ENCODE measurements at regions of chr1 and their contacts with region 1.

Region 1: DNA sequence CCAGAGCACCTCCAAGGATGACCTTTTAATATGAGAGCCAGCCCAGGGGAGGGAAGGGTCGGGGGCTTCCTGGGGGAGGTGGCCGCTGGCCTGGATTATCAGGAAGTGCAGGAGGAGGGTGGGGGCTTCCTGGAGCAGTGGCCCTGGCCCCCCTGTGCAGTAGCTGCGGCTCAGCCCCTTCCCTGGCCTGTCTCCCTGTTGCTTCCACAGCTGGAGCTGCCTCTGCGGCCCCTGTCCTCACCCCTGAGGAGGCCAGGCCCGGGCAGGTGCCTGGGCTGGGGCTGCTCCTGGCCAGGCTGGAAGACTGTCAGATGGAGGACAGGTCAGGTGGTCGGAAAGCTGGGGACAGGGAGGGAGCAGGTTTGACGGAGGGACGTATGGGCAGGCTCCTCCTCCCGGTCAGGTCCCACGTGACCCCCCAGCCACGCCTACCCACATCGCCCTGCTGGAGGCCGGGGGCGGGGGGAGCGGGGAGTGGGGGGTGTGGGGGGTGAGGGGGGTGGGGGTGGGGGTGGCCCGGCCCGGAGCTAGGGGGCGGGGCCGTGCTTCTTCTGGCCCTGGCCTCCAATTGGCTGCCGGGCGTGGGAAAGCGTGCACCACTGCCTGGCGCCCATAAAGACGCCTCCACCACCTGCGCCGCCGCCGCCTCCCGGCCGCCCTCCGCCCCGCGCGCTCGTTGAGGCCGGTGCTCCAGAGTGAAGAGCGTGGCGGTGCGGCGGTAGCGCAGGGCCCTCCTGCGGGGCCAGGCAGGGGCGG is 10.2 kb upstream of the TNFRSF14 start:
- DNase-seq: peak; percentile 93 to 94
- ATAC-seq: peak; percentile 77
- H3K4me3 ChIP-seq: peak overlapping the region in 1 of 2 donors; percentile 43
- H3K27ac ChIP-seq: no peak overlapping the region
- H3K4me1 ChIP-seq: no peaks in the 10 kb centered on the region
- H3K27me3 ChIP-seq: no peaks in the 10 kb centered on the region

Region 2: DNA sequence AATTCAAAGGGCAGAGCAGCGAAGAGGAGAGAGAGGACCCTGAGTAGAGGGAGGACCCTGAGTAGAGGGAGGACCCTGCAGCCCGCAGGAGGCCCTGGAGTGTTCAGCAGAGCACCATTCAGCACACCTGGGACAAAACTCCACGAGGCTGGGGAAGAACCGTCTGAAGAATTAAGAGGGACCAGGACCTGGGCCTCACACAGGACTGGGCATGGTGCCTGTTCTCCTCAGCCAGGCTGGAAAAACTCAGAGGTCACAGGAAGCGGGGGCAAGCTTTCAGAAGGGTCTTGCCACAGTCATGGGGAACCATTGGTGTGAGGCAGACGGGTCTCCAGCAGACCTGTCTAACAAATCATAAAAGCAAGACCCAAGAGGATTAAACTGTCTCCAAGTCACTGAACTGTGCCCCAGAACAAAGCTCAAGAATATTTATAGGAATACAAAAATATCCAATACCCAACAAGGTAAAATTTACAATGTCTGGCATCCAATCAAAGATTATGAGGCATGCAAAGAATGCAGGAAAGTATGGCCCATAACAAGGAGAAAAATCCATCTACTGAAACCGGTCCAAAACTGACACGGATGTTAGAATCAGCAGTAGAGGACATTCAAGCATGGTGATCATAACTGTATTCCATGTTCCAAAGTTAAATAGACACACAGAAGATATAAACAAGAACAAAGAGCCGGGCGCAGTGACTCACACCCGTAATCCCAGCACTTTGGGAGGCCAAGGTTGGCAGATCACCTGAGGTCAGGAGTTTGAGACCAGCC is 185.2 kb before region 1 on chr1:
- intact Hi-C with region 1: no loop called
- DNase-seq: peak; percentile 40 to 47
- ATAC-seq: no peak
- H3K4me3 ChIP-seq: no peak overlapping the region
- H3K27ac ChIP-seq: no peak overlapping the region
- H3K4me1 ChIP-seq: no peaks in the 10 kb centered on the region
- H3K27me3 ChIP-seq: no peaks in the 10 kb centered on the region

Region 3: GRCh38 chr1:2586154-2587070 is 40.5 kb after region 1 on chr1 and contains the start of gene PRXL2B:
- intact Hi-C with region 1: loop called in 1 of 2 experiments (anchors 1 kb)
- DNase-seq: peak; percentile 100
- ATAC-seq: peak; percentile 96
- H3K4me3 ChIP-seq: peak within 1 kb of the TSS; percentile 61 to 70
- H3K27ac ChIP-seq: peak within 1 kb of the TSS; percentile 45 to 53
- H3K4me1 ChIP-seq: no peaks in the 10 kb centered on the region
- H3K27me3 ChIP-seq: no peaks in the 10 kb centered on the region
- total RNA-seq, gene PRXL2B: 7.1 to 15.1 TPM

Region 4: DNA sequence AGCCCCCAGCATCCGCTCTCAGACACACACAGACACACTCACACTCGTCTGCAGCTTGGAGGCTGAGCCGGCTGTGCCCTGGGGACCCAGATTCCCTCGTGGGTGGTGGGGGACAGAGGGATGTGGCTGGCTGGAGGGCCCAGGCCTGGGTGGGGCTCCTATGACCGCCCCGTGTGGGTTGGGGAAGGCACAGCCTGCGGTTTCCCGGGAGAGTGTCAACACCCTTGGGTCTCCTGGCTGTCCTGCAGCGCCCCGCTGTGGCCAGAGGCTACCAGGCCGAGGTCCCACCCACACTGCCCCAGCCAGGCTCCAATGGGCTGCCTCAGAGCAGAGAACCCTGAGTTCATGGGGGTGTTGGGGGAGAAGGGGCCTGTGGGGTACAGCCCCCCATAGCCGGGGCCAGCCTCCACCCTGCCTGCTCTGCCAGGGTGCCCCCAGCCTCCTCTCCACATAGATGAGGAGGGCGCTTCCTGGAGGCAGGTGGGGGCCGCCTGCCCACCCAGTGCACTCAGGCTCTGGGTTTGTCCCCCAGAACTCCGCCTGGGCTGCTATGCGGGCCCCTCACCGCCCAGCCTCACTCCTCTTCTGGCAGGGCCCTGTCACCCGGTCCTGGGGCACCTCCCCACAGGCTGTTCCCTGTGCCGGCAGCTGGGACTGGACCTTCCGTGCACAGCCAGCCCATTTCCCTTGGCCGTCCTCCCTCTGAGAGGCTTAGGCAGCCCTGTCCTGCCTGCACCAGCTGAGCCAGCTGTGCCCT is 255.8 kb after region 1 on chr1 and contains the start of gene TTC34:
- intact Hi-C with region 1: no loop called
- DNase-seq: peak; percentile 49 to 75
- ATAC-seq: no peak
- H3K4me3 ChIP-seq: no peak within 1 kb of the TSS
- H3K27ac ChIP-seq: no peak within 1 kb of the TSS
- H3K4me1 ChIP-seq: no peaks in the 10 kb centered on the region
- H3K27me3 ChIP-seq: no peaks in the 10 kb centered on the region
- total RNA-seq, gene TTC34: 0.55 to 1.3 TPM

Measured in aorta (tissue), 5 donors.